ENCODE measurements at regions of chr13 and their contacts with region 1.

Region 1: DNA sequence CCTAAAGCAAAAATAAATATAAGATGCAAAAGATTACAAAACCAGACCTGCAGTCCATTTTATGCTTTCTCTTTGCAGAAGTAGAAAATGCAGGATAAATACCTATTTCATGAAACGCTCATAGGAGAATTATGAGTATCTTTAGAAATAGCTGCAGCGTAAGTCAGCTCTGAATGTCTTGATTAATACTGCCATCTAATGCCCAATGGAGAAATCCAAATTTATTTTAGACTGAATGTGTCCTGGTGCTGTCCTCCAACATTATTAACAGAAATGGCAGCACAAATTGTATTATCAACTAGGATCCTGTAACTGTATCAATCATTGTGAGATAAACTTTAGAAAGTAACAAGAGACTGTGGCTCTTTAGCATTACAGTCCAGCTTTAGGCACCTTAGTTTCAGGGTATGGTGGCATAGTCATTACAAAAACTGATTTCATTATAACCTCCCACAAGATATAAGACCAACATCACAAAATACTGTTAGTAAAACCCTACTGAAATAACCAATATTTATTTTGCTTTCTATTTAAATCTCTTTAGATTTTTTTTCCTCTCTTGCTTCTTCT is 162.1 kb upstream of the MIR17HG start:
- DNase-seq: no peak
- H3K4me3 ChIP-seq: no peak overlapping the region
- H3K27ac ChIP-seq: no peak overlapping the region
- H3K4me1 ChIP-seq: no peaks in the 10 kb centered on the region
- H3K27me3 ChIP-seq: no peaks in the 10 kb centered on the region
- CTCF ChIP-seq: peak in 2 of 3 experiments; percentile 20 to 34; a peak in 2 of 4 replicates
- EP300 ChIP-seq: no peak
- POLR2A ChIP-seq: no peak
- RAD21 ChIP-seq: peak; percentile 66 to 67

Region 2: DNA sequence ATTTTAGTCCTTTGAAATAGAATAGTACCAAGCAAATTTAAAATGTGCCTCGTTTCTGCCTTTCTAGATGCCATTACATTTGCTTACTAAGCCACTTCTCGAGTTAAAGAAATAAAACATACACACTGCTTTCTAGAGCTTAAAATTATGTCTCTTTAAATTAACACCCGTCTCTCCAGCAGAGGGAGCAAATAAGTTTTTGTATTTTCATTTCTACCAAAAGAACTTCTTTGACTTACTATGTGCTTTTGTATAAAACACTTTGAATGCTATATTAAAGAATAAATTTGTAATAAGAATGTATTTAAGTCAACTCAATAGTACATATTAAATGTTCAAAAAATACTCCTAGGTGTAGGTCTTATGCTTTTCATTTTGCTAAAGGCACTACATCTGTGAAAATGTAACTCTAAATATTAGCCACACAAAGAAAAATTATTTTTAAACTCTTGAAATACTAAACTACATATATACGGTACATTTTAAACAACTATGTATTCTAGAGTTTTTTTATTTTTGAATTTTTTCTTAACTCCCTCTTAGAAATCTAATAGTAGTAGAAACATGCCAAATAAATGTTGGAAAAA is 107.2 kb before region 1 on chr13:
- CTCF ChIA-PET with region 1: interaction called, 24 read pairs
- POLR2A ChIA-PET with region 1: no interaction called
- DNase-seq: no peak
- H3K4me3 ChIP-seq: no peak overlapping the region
- H3K27ac ChIP-seq: no peak overlapping the region
- H3K4me1 ChIP-seq: no peaks in the 10 kb centered on the region
- H3K27me3 ChIP-seq: peaks cover 0 to 1% (median 0%) of the 10 kb centered on the region in 4 experiments; a peak in 1 of 7 replicates
- CTCF ChIP-seq: peak in 1 of 3 experiments; percentile 25; a peak in 1 of 4 replicates
- EP300 ChIP-seq: no peak
- POLR2A ChIP-seq: no peak
- RAD21 ChIP-seq: 0 out of 4 replicates have a peak, but pooled peaks of 1 of the 2 experiments have one; percentile 7

Region 3: DNA sequence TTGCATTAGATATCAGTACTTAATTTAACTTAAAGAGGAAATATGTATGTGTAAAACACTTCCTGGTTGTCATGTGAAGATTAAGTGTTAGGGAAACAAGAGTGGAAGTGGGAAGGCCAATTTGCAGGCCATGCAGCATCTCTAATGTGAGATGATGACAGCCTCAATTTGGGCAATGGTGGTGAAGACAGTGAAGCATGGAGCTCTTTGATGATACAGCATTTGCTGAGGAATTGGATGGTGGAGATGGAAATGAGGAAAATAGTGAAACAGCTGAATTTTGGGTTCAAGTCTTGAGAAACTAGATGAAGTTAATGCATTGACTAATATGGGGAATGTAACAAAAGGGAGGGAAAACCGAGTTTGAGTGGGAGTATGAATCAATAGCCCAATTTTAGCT is 69.6 kb before region 1 on chr13:
- CTCF ChIA-PET with region 1: no interaction called
- POLR2A ChIA-PET with region 1: no interaction called
- DNase-seq: no peak
- H3K4me3 ChIP-seq: no peak overlapping the region
- H3K27ac ChIP-seq: no peak overlapping the region
- H3K4me1 ChIP-seq: no peaks in the 10 kb centered on the region
- H3K27me3 ChIP-seq: no peaks in the 10 kb centered on the region
- CTCF ChIP-seq: no peak
- EP300 ChIP-seq: no peak
- POLR2A ChIP-seq: no peak
- RAD21 ChIP-seq: no peak

Region 4: GRCh38 chr13:91133941-91134802 is 51.2 kb before region 1 on chr13:
- CTCF ChIA-PET with region 1: interaction called, 26 read pairs
- POLR2A ChIA-PET with region 1: no interaction called
- DNase-seq: no peak
- H3K4me3 ChIP-seq: no peak overlapping the region
- H3K27ac ChIP-seq: no peak overlapping the region
- H3K4me1 ChIP-seq: peaks cover 0 to under 1% (median 0%) of the 10 kb centered on the region in 4 experiments; a peak in 2 of 7 replicates
- H3K27me3 ChIP-seq: no peaks in the 10 kb centered on the region
- CTCF ChIP-seq: peak; percentile 8 to 79 (median 74)
- EP300 ChIP-seq: no peak
- POLR2A ChIP-seq: no peak
- RAD21 ChIP-seq: peak; percentile 79 to 84

Region 5: GRCh38 chr13:91162180-91162579 is 23.2 kb before region 1 on chr13:
- CTCF ChIA-PET with region 1: interaction called, 16 read pairs
- POLR2A ChIA-PET with region 1: no interaction called
- DNase-seq: no peak
- H3K4me3 ChIP-seq: no peak overlapping the region
- H3K27ac ChIP-seq: no peak overlapping the region
- H3K4me1 ChIP-seq: no peaks in the 10 kb centered on the region
- H3K27me3 ChIP-seq: no peaks in the 10 kb centered on the region; a peak in 1 of 7 replicates
- CTCF ChIP-seq: peak in 2 of 3 experiments; percentile 51 to 55; a peak in 3 of 4 replicates
- EP300 ChIP-seq: no peak
- POLR2A ChIP-seq: no peak
- RAD21 ChIP-seq: peak; percentile 52 to 72